Endothelial cell of umbilical vein (primary cell): ENCODE measurements at regions of chr16 and their contacts with region 1.

Region 1: DNA sequence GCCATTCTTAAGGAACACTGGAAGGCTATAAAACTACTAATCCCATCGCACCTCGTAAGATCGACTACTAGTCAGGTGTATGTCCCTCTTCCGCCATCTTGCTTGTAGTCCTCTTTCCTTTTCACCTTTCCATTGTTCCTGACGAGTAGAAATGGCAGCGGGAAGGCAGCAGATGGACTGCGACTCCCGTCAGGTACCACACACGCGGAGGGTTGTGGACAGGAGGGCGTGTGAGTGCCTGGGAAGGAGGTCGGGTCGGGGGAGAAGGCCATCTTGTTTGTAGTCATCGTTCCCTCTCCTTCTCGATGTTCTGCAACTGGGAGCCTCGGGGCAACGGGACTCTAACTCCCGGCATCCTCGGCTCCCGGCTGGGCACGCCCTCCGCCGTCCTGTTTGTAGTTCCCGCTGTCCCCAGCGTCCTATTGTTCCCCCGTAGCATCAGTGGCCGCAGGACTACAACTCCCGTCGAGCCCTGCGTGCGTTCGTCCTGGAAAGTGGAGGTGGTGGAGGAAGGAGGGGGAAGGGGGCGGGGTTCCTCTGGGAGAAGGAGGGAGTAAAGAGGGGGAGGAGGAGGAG is 324 bp upstream of the FBXL19 start:
- DNase-seq: peak; percentile 100
- H3K4me3 ChIP-seq: peak overlapping the region; percentile 3 to 87 (median 65)
- H3K27ac ChIP-seq: peak overlapping the region; percentile 66
- H3K4me1 ChIP-seq: peaks cover 2% of the 10 kb centered on the region
- H3K27me3 ChIP-seq: no peaks in the 10 kb centered on the region
- CTCF ChIP-seq: no peak
- POLR2A ChIP-seq: peak; percentile 9

Region 2: GRCh38 chr16:30650369-30651123 is 272.5 kb before region 1 on chr16 and contains the start of gene PRR14:
- CTCF ChIA-PET with region 1: no interaction called
- POLR2A ChIA-PET with region 1: no interaction called
- dilution Hi-C with region 1: no loop called
- intact Hi-C with region 1: loop called (anchors 2 kb)
- DNase-seq: peak; percentile 100
- H3K4me3 ChIP-seq: peak within 1 kb of the TSS; percentile 36 to 95 (median 66)
- H3K27ac ChIP-seq: peak within 1 kb of the TSS; percentile 52
- H3K4me1 ChIP-seq: peaks cover 11% of the 10 kb centered on the region
- H3K27me3 ChIP-seq: no peaks in the 10 kb centered on the region
- CTCF ChIP-seq: no peak
- POLR2A ChIP-seq: peak; percentile 25
- total RNA-seq, gene PRR14: 57.0 and 70.0 TPM in 2 replicates

Region 3: DNA sequence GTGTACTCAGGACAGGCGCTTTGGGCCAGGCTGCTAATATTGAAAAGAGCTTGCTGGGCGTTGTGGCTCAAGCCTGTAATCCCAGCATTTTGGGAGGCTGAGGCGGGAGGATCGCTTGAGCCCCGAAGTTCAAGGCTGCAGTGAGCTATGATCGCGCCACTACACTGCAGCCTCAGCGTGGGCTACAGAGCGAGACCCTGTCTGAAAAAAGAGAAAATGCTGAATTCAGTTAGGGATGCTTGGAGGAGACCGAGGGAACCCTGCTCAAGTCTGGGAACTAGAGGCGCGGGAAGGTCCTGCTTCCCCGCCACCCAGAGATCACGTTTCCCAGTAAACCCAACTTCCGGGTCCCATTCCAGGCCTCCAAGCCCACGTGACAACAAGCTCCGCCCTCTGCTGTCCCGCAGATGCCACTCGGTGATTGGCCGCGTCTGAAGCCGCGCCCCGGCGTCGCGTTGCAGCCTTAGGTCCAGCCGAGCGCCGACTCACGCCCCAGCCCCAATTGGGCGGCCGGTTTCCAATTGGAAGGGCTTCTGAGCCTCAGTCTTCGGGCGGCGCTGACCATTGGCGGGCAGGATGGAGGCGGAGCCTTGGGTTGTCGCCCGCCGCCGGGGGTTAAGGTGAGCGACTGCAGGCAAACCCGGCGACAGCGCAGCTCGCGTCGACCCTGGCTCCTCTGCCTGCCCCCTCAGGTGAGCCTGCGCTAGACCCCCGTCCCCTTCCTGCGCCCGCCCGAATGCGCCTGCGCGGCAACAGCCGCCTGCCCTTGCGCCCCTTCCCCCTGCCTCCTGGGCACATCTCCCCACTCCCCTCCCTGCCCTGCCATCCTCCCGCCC is 175.0 kb before region 1 on chr16 and contains the start of gene PHKG2:
- CTCF ChIA-PET with region 1: no interaction called
- POLR2A ChIA-PET with region 1: no interaction called
- dilution Hi-C with region 1: no loop called
- intact Hi-C with region 1: loop called (anchors 1 kb)
- DNase-seq: peak; percentile 99
- H3K4me3 ChIP-seq: peak within 1 kb of the TSS; percentile 14 to 86 (median 49)
- H3K27ac ChIP-seq: peak within 1 kb of the TSS; percentile 47
- H3K4me1 ChIP-seq: peaks cover 7% of the 10 kb centered on the region
- H3K27me3 ChIP-seq: no peaks in the 10 kb centered on the region
- CTCF ChIP-seq: no peak
- POLR2A ChIP-seq: peak; percentile 92
- total RNA-seq, gene PHKG2: 33.0 and 34.1 TPM in 2 replicates

Region 4: GRCh38 chr16:30797670-30798309 is 125.3 kb before region 1 on chr16:
- CTCF ChIA-PET with region 1: no interaction called
- POLR2A ChIA-PET with region 1: no interaction called
- dilution Hi-C with region 1: no loop called
- intact Hi-C with region 1: no loop called
- DNase-seq: no peak
- H3K4me3 ChIP-seq: no peak overlapping the region
- H3K27ac ChIP-seq: no peak overlapping the region
- H3K4me1 ChIP-seq: no peaks in the 10 kb centered on the region
- H3K27me3 ChIP-seq: no peaks in the 10 kb centered on the region
- CTCF ChIP-seq: peak in 1 of 2 donors; percentile 6
- POLR2A ChIP-seq: no peak

Region 5: GRCh38 chr16:30813821-30814189 is 109.2 kb before region 1 on chr16:
- CTCF ChIA-PET with region 1: interaction called, 5 read pairs
- POLR2A ChIA-PET with region 1: no interaction called
- dilution Hi-C with region 1: no loop called
- intact Hi-C with region 1: loop called (anchors 1 kb)
- DNase-seq: no peak
- H3K4me3 ChIP-seq: peak overlapping the region; percentile 2 to 26 (median 10)
- H3K27ac ChIP-seq: peak overlapping the region; percentile 44
- H3K4me1 ChIP-seq: peaks cover 4% of the 10 kb centered on the region
- H3K27me3 ChIP-seq: no peaks in the 10 kb centered on the region
- CTCF ChIP-seq: no peak
- POLR2A ChIP-seq: no peak

Region 6: DNA sequence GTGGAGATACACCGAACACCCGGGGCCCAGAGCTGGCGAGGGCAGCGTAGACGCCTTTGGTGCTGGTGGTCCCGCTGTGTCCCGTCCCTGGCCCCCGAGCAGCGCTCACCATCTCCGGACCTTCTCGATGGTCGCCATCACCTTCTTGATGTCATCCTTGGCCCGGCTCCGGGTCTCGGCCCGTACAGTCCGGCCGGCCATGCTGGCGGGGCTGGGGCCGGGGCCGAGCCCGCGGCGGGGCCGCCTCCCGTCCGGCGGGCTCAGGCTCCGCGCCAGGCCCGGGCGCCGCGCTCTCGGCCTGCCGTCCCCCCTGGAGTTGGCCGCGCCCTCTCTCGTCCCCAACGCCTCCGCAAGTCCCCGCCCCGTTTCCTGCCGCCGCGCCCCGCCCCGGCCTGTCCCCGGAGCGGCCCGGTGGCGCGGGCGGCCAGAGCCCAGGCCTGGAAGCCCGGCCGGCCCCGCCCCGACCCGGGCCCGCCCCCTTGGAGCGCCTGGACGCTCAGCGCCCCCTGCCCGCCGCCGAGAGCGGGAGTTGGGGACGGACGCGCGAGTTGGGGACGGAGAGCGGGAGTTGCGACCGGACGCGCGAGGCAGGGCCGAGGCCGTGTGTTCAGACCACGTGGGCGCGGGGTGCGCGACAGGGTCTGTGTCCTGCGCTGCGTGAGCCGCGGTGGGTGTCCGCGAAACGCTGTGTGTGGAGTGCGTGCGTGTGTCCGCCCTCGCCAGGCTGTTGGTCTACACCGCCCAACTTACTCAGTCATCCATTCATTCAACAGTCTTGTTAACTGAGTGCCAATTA is 29.1 kb before region 1 on chr16 and contains the start of gene BCL7C:
- CTCF ChIA-PET with region 1: interaction called, 3 read pairs
- POLR2A ChIA-PET with region 1: interaction called, 5 read pairs
- dilution Hi-C with region 1: no loop called
- intact Hi-C with region 1: loop called (anchors 1 kb)
- DNase-seq: peak; percentile 89
- H3K4me3 ChIP-seq: peak within 1 kb of the TSS; percentile 39 to 72 (median 63)
- H3K27ac ChIP-seq: peak within 1 kb of the TSS; percentile 38
- H3K4me1 ChIP-seq: peaks cover 13% of the 10 kb centered on the region
- H3K27me3 ChIP-seq: no peaks in the 10 kb centered on the region
- CTCF ChIP-seq: peak; percentile 24 to 55
- POLR2A ChIP-seq: peak; percentile 88
- total RNA-seq, gene BCL7C: 38.3 and 39.5 TPM in 2 replicates

Region 7: GRCh38 chr16:30957456-30958174 is 34.6 kb after region 1 on chr16 and contains the start of gene SETD1A:
- CTCF ChIA-PET with region 1: no interaction called
- POLR2A ChIA-PET with region 1: no interaction called
- dilution Hi-C with region 1: no loop called
- intact Hi-C with region 1: loop called (anchors 1 kb)
- DNase-seq: peak; percentile 90
- H3K4me3 ChIP-seq: peak within 1 kb of the TSS; percentile 60 to 71 (median 67)
- H3K27ac ChIP-seq: peak within 1 kb of the TSS; percentile 100
- H3K4me1 ChIP-seq: peaks cover 12% of the 10 kb centered on the region
- H3K27me3 ChIP-seq: no peaks in the 10 kb centered on the region
- CTCF ChIP-seq: no peak
- POLR2A ChIP-seq: no peak
- total RNA-seq, gene SETD1A: 21.3 and 25.6 TPM in 2 replicates

Region 8: DNA sequence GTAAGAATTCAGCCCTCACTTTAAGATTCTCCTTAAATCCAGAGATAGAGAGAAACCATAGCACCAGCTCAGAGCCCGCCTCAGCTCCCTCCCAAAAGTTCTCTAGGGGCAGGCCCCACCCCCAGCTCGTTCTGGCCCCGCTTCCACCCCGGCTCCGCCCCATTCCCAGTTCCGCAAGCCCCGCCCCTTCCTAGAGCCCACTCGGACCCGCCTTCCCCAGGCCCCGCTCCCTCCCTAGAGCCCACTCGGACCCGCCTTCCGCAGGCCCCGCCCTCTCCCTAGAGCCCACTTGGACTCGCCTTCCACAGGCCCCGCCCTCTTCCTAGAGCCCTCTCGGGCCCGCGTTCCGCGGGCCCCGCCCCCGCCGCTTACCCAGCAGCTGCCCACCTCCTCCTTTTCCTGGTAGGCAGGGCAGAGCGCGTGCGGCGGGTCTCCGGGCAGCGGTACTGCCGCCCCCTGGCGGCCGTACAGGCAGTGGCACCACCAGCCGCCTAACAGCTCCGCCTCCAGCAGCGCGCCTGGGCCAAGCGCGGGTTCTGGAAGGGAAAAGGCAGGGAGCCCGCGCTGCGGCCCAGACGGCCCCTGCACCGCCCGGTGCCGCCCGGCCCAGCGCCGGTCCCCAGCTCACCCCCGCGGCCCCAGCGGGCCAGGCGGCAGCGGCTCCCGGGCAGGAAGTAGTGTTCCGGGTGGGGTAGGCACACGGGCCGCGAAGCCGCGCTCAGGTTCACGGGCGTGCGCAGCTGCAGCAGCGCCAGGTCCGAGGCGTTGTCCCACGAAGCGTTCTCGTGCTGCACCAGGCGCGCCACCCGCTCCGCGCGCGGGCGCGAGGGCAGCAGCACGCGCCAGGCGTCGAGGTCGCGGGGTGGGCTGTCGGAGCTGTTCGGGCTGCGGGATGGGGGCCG is 219.3 kb after region 1 on chr16:
- CTCF ChIA-PET with region 1: no interaction called
- POLR2A ChIA-PET with region 1: no interaction called
- dilution Hi-C with region 1: no loop called
- intact Hi-C with region 1: no loop called
- DNase-seq: peak; percentile 99
- H3K4me3 ChIP-seq: peak overlapping the region in 2 of 3 experiments; percentile 6 to 23
- H3K27ac ChIP-seq: peak overlapping the region; percentile 30
- H3K4me1 ChIP-seq: peaks cover 13% of the 10 kb centered on the region
- H3K27me3 ChIP-seq: peaks cover 5 to 13% of the 10 kb centered on the region in 2 experiments
- CTCF ChIP-seq: peak; percentile 98 to 99
- POLR2A ChIP-seq: peak; percentile 29